ENCODE measurements at regions of chr9 and their contacts with region 1.

Region 1: DNA sequence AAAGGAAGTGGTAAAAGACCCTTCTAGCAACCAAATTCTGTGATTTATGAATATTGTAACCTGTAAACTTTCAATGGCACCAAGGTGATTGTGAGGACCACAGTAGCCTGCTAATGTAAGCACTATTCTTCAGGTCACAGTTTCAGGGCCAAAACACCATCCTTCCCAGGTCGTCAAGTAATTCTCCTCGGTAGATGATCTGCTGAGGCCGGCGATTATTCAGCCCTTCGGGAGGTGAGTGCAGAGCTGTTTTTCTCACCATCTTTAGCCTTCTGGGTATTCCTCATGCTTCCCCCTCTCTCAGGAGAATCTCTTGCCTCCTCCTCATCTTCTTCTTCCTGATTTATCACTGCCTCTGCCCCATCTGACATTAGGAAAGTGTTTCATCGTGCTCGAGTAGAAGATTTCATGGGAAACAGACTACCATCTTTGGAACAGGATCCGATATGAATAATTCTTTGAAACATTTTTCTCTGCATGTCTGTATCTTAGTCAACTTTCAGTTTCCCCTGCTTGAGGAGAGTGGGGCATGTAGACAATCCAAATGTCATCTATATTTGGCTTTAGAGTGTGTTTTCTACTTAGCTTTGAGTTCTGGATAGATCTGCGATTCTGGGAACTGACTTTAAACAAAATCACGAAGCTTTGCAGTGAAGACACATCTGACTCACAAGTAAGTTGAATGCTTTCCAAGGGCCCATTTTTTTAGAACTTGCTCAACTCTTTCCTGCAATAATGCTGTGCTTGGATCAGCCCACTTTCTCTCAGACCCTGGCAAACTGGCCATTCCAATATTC is 173.9 kb downstream of the AOPEP start:
- DNase-seq: peak; percentile 94
- H3K4me3 Mint-ChIP-seq: peak overlapping the region; percentile 64
- H3K27ac Mint-ChIP-seq: peak overlapping the region; percentile 97
- H3K4me1 Mint-ChIP-seq: peaks cover 30% of the 10 kb centered on the region
- H3K27me3 Mint-ChIP-seq: no peaks in the 10 kb centered on the region
- CTCF ChIP-seq: no peak

Region 2: GRCh38 chr9:94717761-94718160 is 182.7 kb before region 1 on chr9:
- CTCF ChIA-PET with region 1: no interaction called
- POLR2A ChIA-PET with region 1: no interaction called
- intact Hi-C with region 1: no loop called
- DNase-seq: no peak
- H3K4me3 Mint-ChIP-seq: no peak overlapping the region
- H3K27ac Mint-ChIP-seq: no peak overlapping the region
- H3K4me1 Mint-ChIP-seq: peaks cover 5% of the 10 kb centered on the region
- H3K27me3 Mint-ChIP-seq: no peaks in the 10 kb centered on the region
- CTCF ChIP-seq: no peak

Region 3: DNA sequence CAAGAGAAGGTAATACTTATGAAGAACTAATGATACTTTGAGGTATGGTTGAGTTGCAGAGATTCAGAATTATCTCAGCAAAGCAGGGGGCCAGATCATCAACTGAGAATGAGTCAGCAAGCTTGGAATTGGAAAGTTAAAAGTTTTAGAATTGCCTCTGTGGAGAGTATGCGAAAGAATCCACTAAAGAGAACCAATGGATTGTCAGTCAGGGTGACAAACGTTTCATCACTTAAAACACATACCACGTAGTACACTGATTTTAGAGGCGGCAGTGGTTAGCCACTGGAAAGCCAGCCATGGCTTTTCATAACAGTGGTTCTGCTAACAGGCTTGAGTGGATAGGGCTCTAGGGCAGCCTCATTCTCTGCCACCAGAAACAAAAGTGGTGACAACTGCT is 143.3 kb before region 1 on chr9:
- CTCF ChIA-PET with region 1: no interaction called
- POLR2A ChIA-PET with region 1: no interaction called
- intact Hi-C with region 1: no loop called
- DNase-seq: no peak
- H3K4me3 Mint-ChIP-seq: no peak overlapping the region
- H3K27ac Mint-ChIP-seq: no peak overlapping the region
- H3K4me1 Mint-ChIP-seq: peaks cover 6% of the 10 kb centered on the region
- H3K27me3 Mint-ChIP-seq: no peaks in the 10 kb centered on the region
- CTCF ChIP-seq: no peak

Region 4: GRCh38 chr9:94881023-94881422 is 19.4 kb before region 1 on chr9:
- CTCF ChIA-PET with region 1: interaction called, 6 read pairs
- POLR2A ChIA-PET with region 1: interaction called, 29 read pairs
- intact Hi-C with region 1: no loop called
- DNase-seq: no peak
- H3K4me3 Mint-ChIP-seq: no peak overlapping the region
- H3K27ac Mint-ChIP-seq: no peak overlapping the region
- H3K4me1 Mint-ChIP-seq: peaks cover 15% of the 10 kb centered on the region
- H3K27me3 Mint-ChIP-seq: no peaks in the 10 kb centered on the region
- CTCF ChIP-seq: no peak

Region 5: DNA sequence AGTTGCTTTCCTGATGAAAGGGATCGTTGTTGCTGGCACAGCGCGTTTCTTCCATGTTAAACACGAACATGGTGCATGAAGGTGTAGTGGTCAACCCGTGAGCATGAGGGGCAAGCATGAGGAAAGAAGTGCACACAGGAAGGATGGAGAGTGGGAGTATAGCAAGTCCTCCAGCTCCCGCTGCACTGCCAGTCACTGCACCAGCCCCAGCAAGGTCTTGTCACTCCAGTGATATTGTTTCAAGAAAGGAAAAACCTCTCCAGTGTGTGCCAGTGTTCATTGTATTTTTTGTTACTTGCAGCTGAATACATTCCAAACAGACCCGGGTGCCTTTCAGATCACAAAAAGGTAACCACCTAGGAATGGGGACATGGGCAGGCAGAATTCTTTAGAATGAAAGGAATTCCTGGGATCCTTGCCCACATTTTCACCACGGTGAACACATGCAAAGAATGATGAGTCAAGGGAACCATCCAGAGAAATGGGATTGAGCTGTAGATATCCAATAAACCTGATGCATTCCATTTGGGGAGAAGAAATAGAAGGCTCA is 12.4 kb after region 1 on chr9:
- CTCF ChIA-PET with region 1: interaction called, 7 read pairs
- POLR2A ChIA-PET with region 1: interaction called, 55 read pairs
- intact Hi-C with region 1: no loop called
- DNase-seq: peak; percentile 82
- H3K4me3 Mint-ChIP-seq: peak overlapping the region; percentile 21
- H3K27ac Mint-ChIP-seq: peak overlapping the region; percentile 57
- H3K4me1 Mint-ChIP-seq: peaks cover 35% of the 10 kb centered on the region
- H3K27me3 Mint-ChIP-seq: no peaks in the 10 kb centered on the region
- CTCF ChIP-seq: no peak

Region 6: DNA sequence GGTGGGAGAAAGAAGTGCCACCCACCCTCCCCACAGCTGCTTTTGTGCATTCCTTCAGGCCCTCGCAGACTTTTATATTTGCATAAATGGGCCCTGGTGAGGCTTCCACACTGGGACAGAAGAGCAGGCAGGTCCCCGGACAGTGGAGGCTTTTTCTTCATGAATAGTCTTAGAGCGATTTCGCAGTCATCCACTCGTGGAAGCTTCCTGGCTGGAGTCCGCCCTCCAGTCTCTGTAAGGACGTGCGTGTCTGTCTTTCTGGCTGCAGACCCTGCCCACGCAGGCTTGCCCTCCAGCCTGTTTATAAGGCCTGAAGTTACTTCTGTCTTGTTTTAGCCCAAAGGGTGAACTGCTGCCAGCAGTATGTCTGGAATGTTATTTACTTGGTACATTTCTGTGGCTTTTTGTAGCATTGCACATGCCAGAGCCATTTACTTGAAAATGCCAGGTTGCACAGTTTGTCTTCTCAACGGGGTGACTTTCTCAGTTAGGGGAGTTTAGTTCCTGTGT is 21.7 kb after region 1 on chr9:
- CTCF ChIA-PET with region 1: interaction called, 4 read pairs
- POLR2A ChIA-PET with region 1: interaction called, 12 read pairs
- intact Hi-C with region 1: no loop called
- DNase-seq: peak; percentile 82
- H3K4me3 Mint-ChIP-seq: peak overlapping the region; percentile 43
- H3K27ac Mint-ChIP-seq: peak overlapping the region; percentile 85
- H3K4me1 Mint-ChIP-seq: peaks cover 75% of the 10 kb centered on the region
- H3K27me3 Mint-ChIP-seq: no peaks in the 10 kb centered on the region
- CTCF ChIP-seq: no peak